Sigmoid colon (tissue), 7 donors: ENCODE measurements at regions of chr3 and their contacts with region 1.

Region 1: DNA sequence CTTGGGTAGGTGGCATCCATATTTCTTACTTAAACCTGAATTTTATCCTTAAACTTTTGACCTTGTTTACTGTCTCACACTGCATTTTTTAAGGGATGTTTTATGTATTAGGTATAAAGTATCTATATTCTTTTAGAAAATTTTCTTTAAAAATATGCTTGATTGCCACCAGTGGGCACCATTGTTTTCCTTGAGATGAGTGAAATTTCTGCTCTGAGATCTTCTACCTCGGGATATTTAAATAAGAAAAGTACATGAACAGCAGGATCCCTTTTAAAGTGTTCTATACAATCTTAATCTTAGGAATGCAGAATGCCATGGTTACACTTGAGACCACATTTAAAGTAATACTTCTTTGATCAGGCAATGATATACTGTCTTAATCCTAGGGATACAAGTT is 108.7 kb downstream of the SLMAP start:
- DNase-seq: no peak
- H3K4me3 ChIP-seq: no peak overlapping the region
- H3K27ac ChIP-seq: no peak overlapping the region
- H3K4me1 ChIP-seq: no peaks in the 10 kb centered on the region
- H3K27me3 ChIP-seq: no peaks in the 10 kb centered on the region
- CTCF ChIP-seq: peak in 3 of 4 experiments; percentile 38 to 55 (median 50)
- EP300 ChIP-seq: no peak
- POLR2A ChIP-seq: no peak

Region 2: DNA sequence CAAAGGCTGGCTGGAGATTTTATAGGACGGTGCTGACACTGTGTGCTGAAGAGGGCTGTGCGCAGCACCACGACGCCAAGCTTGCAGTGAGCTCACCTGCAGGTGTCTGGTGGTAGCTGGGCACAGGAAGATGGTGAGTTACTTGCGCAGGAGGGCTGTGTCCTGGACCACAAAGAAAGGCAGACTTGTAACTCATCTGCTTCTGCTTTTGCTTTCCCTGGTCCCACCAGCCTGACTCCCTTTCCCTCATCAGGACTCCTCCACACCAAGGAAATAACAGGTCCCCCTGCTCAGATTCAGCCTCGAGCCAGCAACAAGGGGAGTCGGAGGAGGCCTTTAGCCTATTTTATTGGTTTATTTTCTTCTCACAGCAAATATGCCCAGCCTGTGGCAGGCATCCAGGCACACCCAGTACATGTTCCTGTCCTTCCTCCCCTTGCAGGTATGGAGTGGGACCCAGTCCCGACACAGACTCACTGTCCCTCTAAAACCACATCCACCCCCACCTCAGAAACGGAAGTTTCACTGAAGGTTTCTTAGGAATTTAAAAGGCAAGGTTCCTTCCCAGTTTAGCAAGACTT is 107.8 kb after region 1 on chr3:
- intact Hi-C with region 1: loop called (anchors 2 kb)
- DNase-seq: no peak
- H3K4me3 ChIP-seq: no peak overlapping the region
- H3K27ac ChIP-seq: peak overlapping the region; percentile 35 to 66 (median 46)
- H3K4me1 ChIP-seq: peaks cover 0 to 36% (median 29%) of the 10 kb centered on the region in 4 donors
- H3K27me3 ChIP-seq: no peaks in the 10 kb centered on the region
- CTCF ChIP-seq: peak in 1 of 4 experiments; percentile 17
- EP300 ChIP-seq: no peak
- POLR2A ChIP-seq: no peak